Left ventricle myocardium superior (tissue), 1 donor: ENCODE measurements at regions of chr10 and their contacts with region 1.

Region 1: DNA sequence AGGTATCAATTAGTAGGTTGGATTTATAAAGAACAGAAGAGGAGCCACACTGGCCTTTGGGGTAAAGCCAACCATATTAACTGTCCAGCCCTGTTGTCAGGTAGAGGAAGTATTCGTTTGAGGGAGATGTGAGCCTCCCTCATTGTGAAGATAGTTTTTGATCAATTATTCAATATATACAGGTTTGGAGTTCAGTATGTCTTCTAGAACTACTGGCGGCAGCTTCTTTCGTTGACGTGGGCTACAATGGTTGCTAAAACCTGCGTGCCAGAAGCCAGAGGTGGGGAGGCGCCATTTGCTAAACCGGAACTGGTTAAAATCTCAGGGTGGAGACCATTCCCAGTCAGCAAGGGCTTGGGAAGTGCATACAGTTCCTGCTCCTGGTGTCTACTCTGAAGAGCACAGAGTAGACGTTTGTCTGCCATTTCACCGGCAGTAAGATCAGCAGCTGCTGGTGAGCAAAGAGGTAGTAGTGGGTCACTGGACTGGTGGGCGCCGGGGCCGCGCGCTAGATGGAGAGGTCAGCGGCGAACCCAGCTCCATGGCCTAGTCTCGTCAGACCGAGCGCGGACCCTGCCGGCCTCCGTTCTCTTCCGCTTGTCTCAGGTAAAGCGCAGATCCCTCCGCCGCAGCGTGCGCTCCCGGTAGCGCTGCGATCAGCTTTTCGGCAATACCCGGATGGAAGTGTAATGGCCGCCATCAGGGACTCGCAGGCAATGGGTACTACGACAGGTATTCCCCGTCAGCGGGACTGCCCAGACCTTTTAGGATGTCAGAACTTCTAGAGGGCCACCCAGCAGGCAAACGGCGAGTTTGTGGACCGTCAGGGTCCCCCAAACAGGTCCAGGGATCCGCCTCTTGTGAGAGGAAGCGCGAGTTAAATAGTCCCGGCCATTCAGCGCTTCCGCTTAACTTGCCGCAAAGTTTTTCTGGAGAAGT is at the start of gene ZNF518A:
- DNase-seq: peak; percentile 95
- ATAC-seq: peak; percentile 99
- total RNA-seq, gene ZNF518A: 9.6 TPM

Region 2: GRCh38 chr10:95755511-95756004 is 374.1 kb before region 1 on chr10:
- intact Hi-C with region 1: no loop called
- DNase-seq: peak; percentile 32
- ATAC-seq: peak; percentile 69

Region 3: GRCh38 chr10:96089670-96090462 is 39.8 kb before region 1 on chr10:
- intact Hi-C with region 1: loop called (anchors 5 kb)
- DNase-seq: peak; percentile 96
- ATAC-seq: peak; percentile 99